Sigmoid colon (tissue), 7 donors: ENCODE measurements at regions of chr6 and their contacts with region 1.

Region 1: GRCh38 chr6:108074359-108075144 is at the start of gene OSTM1:
- DNase-seq: peak; percentile 94
- H3K4me3 ChIP-seq: peak within 1 kb of the TSS; percentile 77 to 88 (median 86)
- H3K27ac ChIP-seq: peak within 1 kb of the TSS; percentile 80 to 90 (median 84)
- H3K4me1 ChIP-seq: peaks cover 0 to 22% (median 19%) of the 10 kb centered on the region in 4 donors
- H3K27me3 ChIP-seq: no peaks in the 10 kb centered on the region
- CTCF ChIP-seq: no peak
- EP300 ChIP-seq: no peak
- POLR2A ChIP-seq: peak; percentile 37 to 48
- total RNA-seq, gene OSTM1: 48.9 to 267 (median 106) TPM

Region 2: DNA sequence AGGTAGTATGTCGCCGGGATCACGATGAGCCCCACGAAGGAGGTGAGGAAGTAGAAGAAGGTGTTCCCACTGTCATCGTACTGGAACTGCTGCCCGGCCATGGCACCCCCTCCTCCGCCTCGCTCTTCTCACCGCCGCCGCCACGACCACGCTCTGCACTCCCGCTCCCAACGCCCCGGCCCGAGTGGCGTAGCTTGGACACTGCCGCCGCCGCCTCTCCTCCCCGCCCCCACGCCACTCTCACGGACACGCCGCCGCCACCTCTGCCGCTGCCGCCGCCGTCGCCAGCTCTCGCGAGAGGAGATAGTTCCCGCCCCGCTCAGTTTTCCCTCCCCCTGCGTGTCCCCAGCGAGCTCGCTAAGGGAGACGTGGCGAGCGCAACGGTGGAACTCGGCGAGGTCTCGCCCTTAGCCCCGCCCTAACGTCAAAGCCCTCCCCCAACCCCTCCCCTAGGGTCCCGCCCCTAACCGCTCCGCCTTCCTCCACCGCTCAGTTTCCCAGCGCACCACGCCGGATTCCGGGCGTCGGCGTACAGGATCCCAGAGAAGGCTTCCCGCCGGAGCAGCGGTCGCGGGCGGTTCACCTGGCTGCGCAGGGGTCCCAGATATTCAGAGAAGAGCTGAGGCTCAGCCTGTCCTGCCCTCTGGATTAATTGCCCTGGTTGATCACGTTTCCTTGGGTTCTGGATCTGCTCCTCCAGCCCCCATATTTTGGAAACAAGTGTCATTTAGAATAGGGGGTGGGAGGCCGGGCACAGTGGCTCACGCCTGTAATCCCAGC is 116.5 kb before region 1 on chr6 and contains the start of gene SEC63:
- intact Hi-C with region 1: loop called (anchors 2 kb)
- DNase-seq: peak; percentile 98
- H3K4me3 ChIP-seq: peak within 1 kb of the TSS; percentile 79 to 92 (median 90)
- H3K27ac ChIP-seq: peak within 1 kb of the TSS; percentile 87 to 95 (median 92)
- H3K4me1 ChIP-seq: peaks cover 0 to 32% (median 30%) of the 10 kb centered on the region in 4 donors
- H3K27me3 ChIP-seq: no peaks in the 10 kb centered on the region
- CTCF ChIP-seq: no peak
- EP300 ChIP-seq: no peak
- POLR2A ChIP-seq: peak; percentile 86 to 87
- total RNA-seq, gene SEC63: 31.7 to 44.9 (median 33.9) TPM

Region 3: DNA sequence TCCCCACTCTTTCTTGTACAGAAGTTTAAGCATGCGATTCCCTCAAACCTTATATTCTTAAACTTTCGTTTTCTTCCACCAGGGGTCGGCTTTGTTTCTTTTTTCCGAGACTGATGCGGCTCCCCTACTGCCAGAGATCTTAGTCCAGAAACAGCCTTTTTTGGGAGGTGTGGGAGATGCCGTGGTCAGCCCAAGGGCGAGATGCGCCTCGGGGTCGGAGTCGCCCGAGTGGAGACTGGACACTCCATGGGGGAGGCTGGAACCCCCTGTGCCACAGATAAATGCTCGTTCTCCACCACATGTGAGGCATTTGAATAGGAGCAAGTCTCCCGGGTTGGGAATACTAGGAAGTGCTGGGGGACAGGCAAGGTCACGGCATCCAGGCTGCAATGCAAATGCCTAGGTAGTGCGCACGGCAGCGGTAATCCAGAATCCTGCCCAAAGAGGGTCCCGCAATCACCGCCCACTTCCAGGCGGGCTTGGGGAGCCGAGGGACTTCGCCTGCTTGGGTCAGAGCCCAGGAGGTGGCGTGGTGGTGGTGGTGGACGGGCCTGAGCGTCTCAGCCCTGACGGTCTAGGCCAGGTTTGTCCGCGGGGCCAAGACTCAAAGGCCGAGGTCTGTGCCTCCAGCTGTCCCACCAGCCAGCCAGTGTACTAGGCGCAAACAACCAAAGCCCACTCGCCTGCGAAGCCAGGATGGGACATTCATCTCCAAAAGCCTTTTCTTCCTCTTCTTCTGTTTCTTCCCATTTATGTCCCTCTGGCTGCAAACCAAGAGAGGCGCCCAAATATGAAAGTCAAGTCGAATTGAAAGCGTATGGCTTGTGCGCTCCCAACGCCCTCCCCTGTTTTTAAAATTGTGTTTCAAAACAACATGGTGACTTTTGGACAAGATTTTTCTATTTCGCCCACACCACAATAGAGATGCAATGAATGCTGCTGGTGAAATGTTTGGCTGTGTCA is 39.3 kb after region 1 on chr6:
- intact Hi-C with region 1: loop called (anchors 2 kb)
- DNase-seq: no peak
- H3K4me3 ChIP-seq: peak overlapping the region in 2 of 4 donors; percentile 25 to 38
- H3K27ac ChIP-seq: no peak overlapping the region
- H3K4me1 ChIP-seq: peaks cover 0 to 47% (median 42%) of the 10 kb centered on the region in 4 donors
- H3K27me3 ChIP-seq: peaks cover 40 to 84% (median 49%) of the 10 kb centered on the region in 3 donors
- CTCF ChIP-seq: peak in 3 of 4 experiments; percentile 32 to 44 (median 39)
- EP300 ChIP-seq: no peak
- POLR2A ChIP-seq: no peak

Region 4: GRCh38 chr6:108260809-108261569 is 186.4 kb after region 1 on chr6 and contains the start of gene SNX3:
- intact Hi-C with region 1: loop called (anchors 2 kb)
- DNase-seq: peak; percentile 98
- H3K4me3 ChIP-seq: peak within 1 kb of the TSS; percentile 81 to 98 (median 91)
- H3K27ac ChIP-seq: peak within 1 kb of the TSS; percentile 93 to 96 (median 94)
- H3K4me1 ChIP-seq: peaks cover 3 to 37% (median 30%) of the 10 kb centered on the region in 4 donors
- H3K27me3 ChIP-seq: no peaks in the 10 kb centered on the region
- CTCF ChIP-seq: no peak
- EP300 ChIP-seq: peak in 2 of 4 donors; percentile 3 to 74
- POLR2A ChIP-seq: peak; percentile 12 to 60
- total RNA-seq, gene SNX3: 160 to 221 (median 217) TPM

Region 5: GRCh38 chr6:108453597-108454185 is 379.1 kb after region 1 on chr6:
- intact Hi-C with region 1: no loop called
- DNase-seq: no peak
- H3K4me3 ChIP-seq: no peak overlapping the region
- H3K27ac ChIP-seq: no peak overlapping the region
- H3K4me1 ChIP-seq: peaks cover 0 to 12% (median 10%) of the 10 kb centered on the region in 4 donors
- H3K27me3 ChIP-seq: no peaks in the 10 kb centered on the region
- CTCF ChIP-seq: no peak
- EP300 ChIP-seq: no peak
- POLR2A ChIP-seq: no peak

Region 6: GRCh38 chr6:109095027-109095834 is 1020.7 kb after region 1 on chr6 and contains the start of gene CEP57L1:
- intact Hi-C with region 1: loop called (anchors 10 kb)
- DNase-seq: peak; percentile 99
- H3K4me3 ChIP-seq: peak within 1 kb of the TSS; percentile 71 to 77 (median 74)
- H3K27ac ChIP-seq: peak within 1 kb of the TSS; percentile 97 to 99 (median 98)
- H3K4me1 ChIP-seq: peaks cover 0 to 38% (median 26%) of the 10 kb centered on the region in 4 donors
- H3K27me3 ChIP-seq: no peaks in the 10 kb centered on the region
- CTCF ChIP-seq: no peak
- EP300 ChIP-seq: peak in 1 of 4 donors; percentile 19
- POLR2A ChIP-seq: peak; percentile 23 to 65
- total RNA-seq, gene CEP57L1: 12.6 to 21.0 (median 16.5) TPM

Region 7: GRCh38 chr6:109482905-109483735 is 1408.6 kb after region 1 on chr6 and contains the start of gene ZBTB24:
- intact Hi-C with region 1: loop called (anchors 2 kb)
- DNase-seq: peak; percentile 95
- H3K4me3 ChIP-seq: peak within 1 kb of the TSS; percentile 76 to 100 (median 88)
- H3K27ac ChIP-seq: peak within 1 kb of the TSS; percentile 77 to 90 (median 84)
- H3K4me1 ChIP-seq: peaks cover 3 to 44% (median 42%) of the 10 kb centered on the region in 4 donors
- H3K27me3 ChIP-seq: no peaks in the 10 kb centered on the region
- CTCF ChIP-seq: no peak
- EP300 ChIP-seq: no peak
- POLR2A ChIP-seq: no peak
- total RNA-seq, gene ZBTB24: 4.6 to 8.2 (median 6.3) TPM